ENCODE measurements at regions of chr2 and their contacts with region 1.

Region 1: GRCh38 chr2:165293440-165294353 is 54.5 kb downstream of the SCN2A start:
- DNase-seq: peak; percentile 80
- H3K4me3 Mint-ChIP-seq: no peak overlapping the region
- H3K27ac Mint-ChIP-seq: no peak overlapping the region
- H3K4me1 Mint-ChIP-seq: no peaks in the 10 kb centered on the region
- H3K27me3 Mint-ChIP-seq: peaks cover 47% of the 10 kb centered on the region
- CTCF ChIP-seq: peak; percentile 49

Region 2: GRCh38 chr2:165015052-165015642 is 278.6 kb before region 1 on chr2:
- CTCF ChIA-PET with region 1: interaction called, 3 read pairs
- POLR2A ChIA-PET with region 1: no interaction called
- intact Hi-C with region 1: loop called (anchors 5 kb)
- DNase-seq: peak; percentile 73
- H3K4me3 Mint-ChIP-seq: no peak overlapping the region
- H3K27ac Mint-ChIP-seq: no peak overlapping the region
- H3K4me1 Mint-ChIP-seq: peaks cover 5% of the 10 kb centered on the region
- H3K27me3 Mint-ChIP-seq: peaks cover 23% of the 10 kb centered on the region
- CTCF ChIP-seq: peak; percentile 61

Region 3: GRCh38 chr2:165239230-165239629 is 54.5 kb before region 1 on chr2 and contains the start of gene SCN2A:
- CTCF ChIA-PET with region 1: interaction called, 9 read pairs
- POLR2A ChIA-PET with region 1: no interaction called
- intact Hi-C with region 1: loop called (anchors 1 kb)
- DNase-seq: peak; percentile 60
- H3K4me3 Mint-ChIP-seq: no peak within 1 kb of the TSS
- H3K27ac Mint-ChIP-seq: no peak within 1 kb of the TSS
- H3K4me1 Mint-ChIP-seq: no peaks in the 10 kb centered on the region
- H3K27me3 Mint-ChIP-seq: peaks cover 43% of the 10 kb centered on the region
- CTCF ChIP-seq: peak; percentile 49
- total RNA-seq, gene SCN2A: not detected in 2 replicates

Measured in MCF 10A (cell line).